Activated B cell treated with CpG ODN at 0.5 μM for 24 hours (primary cell): ENCODE measurements at regions of chr1 and their contacts with region 1.

Region 1: DNA sequence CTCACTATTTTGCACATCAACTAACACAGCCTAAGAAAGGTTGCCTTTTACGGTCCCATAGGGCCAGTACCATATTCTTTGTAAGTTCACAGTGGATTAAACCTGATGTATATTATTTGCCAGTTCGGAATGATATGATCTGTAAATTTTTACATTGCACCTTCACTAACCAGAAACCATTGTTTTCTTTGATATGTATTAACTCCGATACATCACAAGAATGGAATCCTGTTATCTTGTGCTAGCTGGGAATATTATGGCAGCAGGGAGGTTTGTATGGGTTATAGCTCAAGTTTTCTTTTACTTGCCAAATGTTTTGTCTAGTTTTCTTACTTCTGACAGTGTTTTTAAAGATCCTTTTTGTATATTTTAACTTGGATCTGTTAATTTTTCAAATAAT is 51.4 kb upstream of the S1PR1 start:
- DNase-seq: no peak
- ATAC-seq: no peak
- H3K4me3 Mint-ChIP-seq: no peak overlapping the region
- H3K27ac Mint-ChIP-seq: no peak overlapping the region
- H3K4me1 Mint-ChIP-seq: peaks cover 5% of the 10 kb centered on the region
- H3K27me3 Mint-ChIP-seq: no peaks in the 10 kb centered on the region
- CTCF ChIP-seq: no peak

Region 2: DNA sequence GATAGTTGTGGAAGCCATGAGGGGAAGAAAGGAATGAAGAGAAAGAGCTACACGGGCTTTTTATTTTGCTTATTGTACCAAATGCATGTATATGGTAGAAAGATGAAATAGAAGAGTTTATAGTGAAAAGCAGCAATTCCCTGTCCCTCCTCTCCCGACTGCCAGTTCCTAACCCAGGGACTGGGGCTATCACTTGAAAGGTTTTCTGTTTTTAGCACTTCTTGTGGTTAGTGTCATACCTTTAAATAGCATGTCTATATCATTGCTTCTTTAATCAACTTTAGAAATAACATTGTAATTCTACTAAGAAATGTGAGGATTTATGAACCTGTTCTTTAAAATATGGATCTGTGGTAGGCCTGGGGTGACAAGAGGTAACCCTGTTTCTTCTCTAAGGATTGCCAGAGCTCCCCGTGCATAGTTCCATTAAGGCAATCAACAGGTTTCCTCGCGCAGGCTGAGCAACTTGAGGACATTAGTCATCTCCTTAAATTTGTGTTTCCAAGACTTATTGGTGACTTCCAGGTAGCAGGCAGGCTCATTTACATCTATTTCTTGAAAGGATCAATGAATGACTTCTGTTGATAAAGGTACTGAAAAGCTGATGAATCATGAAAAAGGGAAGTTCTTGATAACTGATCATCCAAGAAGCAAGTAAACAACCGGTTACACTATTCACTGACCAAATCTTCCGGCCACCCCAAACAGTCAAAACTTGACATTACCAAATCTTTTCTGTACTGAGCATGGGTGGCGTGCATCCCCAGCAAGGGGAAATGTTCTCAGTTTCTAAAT is 13.6 kb after region 1 on chr1:
- CTCF ChIA-PET with region 1: no interaction called
- POLR2A ChIA-PET with region 1: no interaction called
- intact Hi-C with region 1: loop called (anchors 2 kb)
- DNase-seq: no peak
- ATAC-seq: peak; percentile 91
- H3K4me3 Mint-ChIP-seq: peak overlapping the region; percentile 11
- H3K27ac Mint-ChIP-seq: peak overlapping the region; percentile 9
- H3K4me1 Mint-ChIP-seq: peaks cover 16% of the 10 kb centered on the region
- H3K27me3 Mint-ChIP-seq: no peaks in the 10 kb centered on the region
- CTCF ChIP-seq: no peak